Activated CD8-positive, alpha-beta T cell treated with anti-CD3 and anti-CD28 coated beads, Interleukin-2, amount 10 ng/mL, durations not matched to agents 7 days and 5 days (primary cell): ENCODE measurements at regions of chr3 and their contacts with region 1.

Region 1: GRCh38 chr3:187139126-187139894 is at the start of gene RPL39L:
- DNase-seq: peak; percentile 96
- ATAC-seq: peak; percentile 98
- H3K4me3 Mint-ChIP-seq: peak within 1 kb of the TSS; percentile 91
- H3K27ac Mint-ChIP-seq: peak within 1 kb of the TSS; percentile 98
- H3K4me1 Mint-ChIP-seq: peaks cover 24% of the 10 kb centered on the region
- H3K27me3 Mint-ChIP-seq: no peaks in the 10 kb centered on the region
- total RNA-seq, gene RPL39L: 21.1 to 23.5 TPM

Region 2: GRCh38 chr3:186930641-186931531 is 208.4 kb before region 1 on chr3:
- CTCF ChIA-PET with region 1: interaction called, 15 read pairs
- POLR2A ChIA-PET with region 1: no interaction called
- DNase-seq: peak; percentile 78
- ATAC-seq: peak; percentile 80
- H3K4me3 Mint-ChIP-seq: peak overlapping the region; percentile 99
- H3K27ac Mint-ChIP-seq: peak overlapping the region; percentile 87
- H3K4me1 Mint-ChIP-seq: peaks cover 28% of the 10 kb centered on the region
- H3K27me3 Mint-ChIP-seq: no peaks in the 10 kb centered on the region

Region 3: DNA sequence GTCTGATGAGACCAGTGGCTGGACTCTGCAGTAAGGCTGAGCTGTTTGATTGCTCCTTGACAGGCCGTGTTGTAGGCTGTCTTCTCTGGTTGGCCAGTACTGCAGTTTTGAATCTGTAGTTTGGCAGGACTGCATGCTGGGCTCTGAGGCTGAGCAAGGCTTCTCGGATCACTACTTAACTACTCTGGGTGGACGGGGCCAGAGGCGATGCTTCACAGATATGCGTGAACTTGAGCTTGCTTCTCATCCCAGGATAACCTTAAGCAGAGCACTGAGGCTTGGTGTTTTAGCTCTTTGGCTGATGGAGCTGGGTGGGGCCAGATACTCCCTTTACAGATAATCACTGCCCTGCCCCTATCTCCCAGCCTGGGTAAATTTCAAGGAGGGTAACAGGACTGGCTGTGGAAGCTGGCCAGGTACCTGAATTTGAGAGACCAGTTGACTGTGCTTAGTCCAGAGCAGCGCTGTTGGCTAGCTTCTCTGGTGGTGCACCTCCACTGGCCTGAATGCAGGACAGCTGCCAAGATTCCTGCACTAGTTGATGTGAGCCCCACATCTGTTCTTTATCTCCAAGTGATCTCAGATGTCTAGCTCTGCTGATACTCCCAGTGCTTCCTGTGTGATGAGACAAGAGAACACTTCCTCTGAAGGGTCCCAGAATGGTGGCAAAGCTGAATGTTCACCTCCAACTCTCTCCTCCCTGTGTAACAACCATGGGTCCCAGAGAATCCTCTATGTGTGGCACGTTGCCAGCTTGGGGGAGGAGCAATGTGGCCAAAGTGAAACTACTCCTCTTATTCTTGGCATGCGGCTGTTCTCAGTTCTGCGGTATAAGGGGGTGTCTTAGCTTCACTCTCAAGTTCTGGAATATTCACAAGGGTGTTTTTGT is 37.9 kb before region 1 on chr3:
- CTCF ChIA-PET with region 1: interaction called, 16 read pairs
- POLR2A ChIA-PET with region 1: no interaction called
- DNase-seq: peak; percentile 70
- ATAC-seq: peak; percentile 81
- H3K4me3 Mint-ChIP-seq: peak overlapping the region; percentile 32
- H3K27ac Mint-ChIP-seq: peak overlapping the region; percentile 74
- H3K4me1 Mint-ChIP-seq: peaks cover 35% of the 10 kb centered on the region
- H3K27me3 Mint-ChIP-seq: no peaks in the 10 kb centered on the region

Region 4: DNA sequence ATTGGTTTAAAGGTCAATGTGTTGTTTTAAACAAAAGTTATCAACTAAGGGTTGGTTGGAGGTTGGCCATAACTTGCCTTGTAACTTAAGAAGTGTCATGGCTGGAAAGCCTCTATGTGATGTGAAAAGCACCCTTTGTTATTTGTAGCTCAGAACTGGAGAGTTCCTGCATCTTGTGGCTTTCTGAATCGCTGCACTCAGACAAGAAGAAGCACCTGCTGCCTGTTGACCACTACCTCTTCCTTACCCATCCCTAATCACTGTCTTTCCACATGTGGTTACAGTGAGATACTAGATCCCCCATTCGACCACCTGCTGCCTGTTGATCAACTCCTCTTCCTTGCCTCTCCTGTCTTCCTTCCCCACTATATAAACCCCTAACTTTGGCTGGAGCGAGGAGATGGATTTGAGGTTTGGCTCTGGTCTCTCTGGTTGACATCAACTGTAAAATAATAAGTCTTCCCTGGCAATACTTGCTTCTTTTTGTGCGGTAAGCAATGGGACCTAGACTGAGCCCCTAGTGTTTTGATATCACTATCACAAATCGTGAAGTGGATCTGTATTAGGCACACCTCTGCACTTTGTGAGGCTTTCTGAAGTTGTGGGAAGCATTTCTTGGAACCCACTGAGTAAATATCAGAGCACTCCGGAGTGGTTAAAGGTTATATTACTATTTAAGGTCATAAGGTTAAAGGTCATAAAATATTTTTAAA is 13.8 kb before region 1 on chr3:
- CTCF ChIA-PET with region 1: interaction called, 70 read pairs
- POLR2A ChIA-PET with region 1: interaction called, 19 read pairs
- DNase-seq: no peak
- ATAC-seq: no peak
- H3K4me3 Mint-ChIP-seq: no peak overlapping the region
- H3K27ac Mint-ChIP-seq: no peak overlapping the region
- H3K4me1 Mint-ChIP-seq: peaks cover 21% of the 10 kb centered on the region
- H3K27me3 Mint-ChIP-seq: no peaks in the 10 kb centered on the region

Region 5: DNA sequence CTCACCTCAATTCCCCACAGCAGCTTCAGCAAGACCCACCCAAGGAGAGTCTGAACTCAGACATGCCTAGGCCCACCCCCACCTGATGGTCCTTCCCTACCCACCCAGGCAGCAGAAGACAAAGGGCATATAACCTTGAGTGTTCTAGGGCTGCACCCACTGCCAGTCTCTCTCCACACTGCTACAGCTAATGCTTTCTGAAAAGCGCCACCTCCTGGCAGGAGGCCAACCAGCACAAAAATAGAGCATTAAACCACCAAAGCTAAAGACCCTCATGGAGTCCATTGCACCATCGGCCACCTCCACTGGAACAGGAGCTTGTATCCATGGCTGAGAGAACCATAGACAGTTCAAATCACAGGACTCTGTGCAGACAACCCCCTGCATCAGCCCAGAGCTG is 11.3 kb after region 1 on chr3:
- CTCF ChIA-PET with region 1: interaction called, 82 read pairs
- POLR2A ChIA-PET with region 1: interaction called, 8 read pairs
- DNase-seq: peak; percentile 71
- ATAC-seq: peak; percentile 64
- H3K4me3 Mint-ChIP-seq: no peak overlapping the region
- H3K27ac Mint-ChIP-seq: no peak overlapping the region
- H3K4me1 Mint-ChIP-seq: peaks cover 3% of the 10 kb centered on the region
- H3K27me3 Mint-ChIP-seq: peaks cover 37% of the 10 kb centered on the region

Region 6: DNA sequence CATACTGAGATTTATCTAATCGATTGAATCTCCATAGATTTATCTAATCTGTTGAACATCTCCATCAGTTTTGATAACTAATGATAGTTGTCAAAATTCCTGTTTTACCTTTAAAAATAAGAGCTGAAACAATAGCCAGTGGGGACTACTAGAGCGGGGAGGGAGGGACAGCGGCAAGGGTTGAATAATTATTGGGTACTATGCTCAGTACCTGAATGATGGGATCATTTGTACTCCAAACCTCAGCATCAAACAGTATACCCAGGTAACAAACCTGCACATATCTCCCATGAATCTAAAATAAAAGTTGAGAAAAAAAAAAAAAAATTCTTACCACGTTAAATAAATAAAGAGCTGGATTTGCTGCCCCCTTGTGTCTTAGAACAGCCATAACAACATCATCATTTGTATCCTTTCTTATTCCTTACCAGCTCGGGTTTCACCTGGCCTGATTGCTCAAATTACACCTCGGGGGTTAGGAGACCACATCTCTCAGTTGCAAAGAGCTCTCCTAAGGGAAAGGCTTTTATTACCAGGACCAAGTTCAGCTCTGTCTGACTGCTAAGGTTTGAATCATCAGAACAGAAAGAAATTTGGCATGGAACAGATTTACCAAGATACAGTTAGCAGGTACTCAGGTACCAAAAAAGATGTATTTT is 25.7 kb after region 1 on chr3:
- CTCF ChIA-PET with region 1: interaction called, 96 read pairs
- POLR2A ChIA-PET with region 1: interaction called, 3 read pairs
- DNase-seq: peak; percentile 63
- ATAC-seq: peak; percentile 47
- H3K4me3 Mint-ChIP-seq: no peak overlapping the region
- H3K27ac Mint-ChIP-seq: no peak overlapping the region
- H3K4me1 Mint-ChIP-seq: peaks cover 4% of the 10 kb centered on the region
- H3K27me3 Mint-ChIP-seq: peaks cover 36% of the 10 kb centered on the region